ENCODE measurements at regions of chr17 and their contacts with region 1.

Region 1: GRCh38 chr17:50596191-50597037 is 35.9 kb downstream of the CACNA1G start:
- DNase-seq: no peak
- H3K4me3 ChIP-seq: no peak overlapping the region
- H3K27ac ChIP-seq: no peak overlapping the region
- H3K4me1 ChIP-seq: no peaks in the 10 kb centered on the region
- H3K27me3 ChIP-seq: no peaks in the 10 kb centered on the region
- CTCF ChIP-seq: peak; percentile 36 to 55
- POLR2A ChIP-seq: no peak

Region 2: GRCh38 chr17:50681263-50682210 is 85.1 kb after region 1 on chr17:
- CTCF ChIA-PET with region 1: no interaction called
- POLR2A ChIA-PET with region 1: no interaction called
- dilution Hi-C with region 1: no loop called
- intact Hi-C with region 1: loop called (anchors 1 kb)
- DNase-seq: peak; percentile 83
- H3K4me3 ChIP-seq: no peak overlapping the region
- H3K27ac ChIP-seq: no peak overlapping the region
- H3K4me1 ChIP-seq: peaks cover 3% of the 10 kb centered on the region
- H3K27me3 ChIP-seq: no peaks in the 10 kb centered on the region
- CTCF ChIP-seq: peak; percentile 71 to 77
- POLR2A ChIP-seq: no peak

Measured in endothelial cell of umbilical vein (primary cell).